H1 (cell line): ENCODE measurements at regions of chr6 and their contacts with region 1.

Region 1: DNA sequence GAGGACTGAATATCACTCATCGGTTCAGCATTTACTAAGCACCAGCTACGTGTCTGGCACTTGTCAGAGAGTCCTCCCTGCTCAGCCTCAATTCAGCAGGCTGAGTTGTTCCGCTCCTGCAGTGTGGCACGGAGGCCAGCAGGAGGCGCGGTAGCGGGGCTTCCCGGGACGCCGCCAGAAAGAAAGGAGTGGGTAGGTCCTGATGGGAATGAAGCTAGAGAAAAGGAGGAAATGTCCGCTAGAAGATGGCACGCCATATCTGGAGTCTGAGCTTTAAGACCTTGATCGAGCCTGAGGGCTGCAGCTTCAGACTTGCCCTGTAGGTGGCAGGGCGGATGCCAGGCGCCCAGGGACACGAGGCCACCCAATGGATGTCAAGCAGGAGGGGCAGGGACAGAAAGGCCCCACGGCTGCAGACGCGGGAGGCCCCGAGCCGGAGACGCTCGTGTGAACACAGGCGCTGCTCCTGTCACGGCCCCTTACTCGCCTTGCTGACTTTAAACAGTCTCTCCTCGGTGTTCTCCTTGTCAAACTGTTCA is 18.7 kb downstream of the SERPINB6 start:
- DNase-seq: peak; percentile 89 to 97
- H3K4me3 ChIP-seq: no peak overlapping the region; a peak in 1 of 8 replicates
- H3K27ac ChIP-seq: no peak overlapping the region
- H3K4me1 ChIP-seq: peaks cover 0 to 7% (median 3%) of the 10 kb centered on the region in 4 experiments; a peak in 6 of 7 replicates
- H3K27me3 ChIP-seq: no peaks in the 10 kb centered on the region
- CTCF ChIP-seq: peak; percentile 79 to 99 (median 89)
- EP300 ChIP-seq: no peak
- POLR2A ChIP-seq: no peak
- RAD21 ChIP-seq: peak; percentile 60 to 74

Region 2: GRCh38 chr6:2783188-2783963 is 169.2 kb before region 1 on chr6:
- CTCF ChIA-PET with region 1: interaction called, 28 read pairs
- POLR2A ChIA-PET with region 1: no interaction called
- DNase-seq: peak in 1 of 2 experiments; percentile 69
- H3K4me3 ChIP-seq: no peak overlapping the region
- H3K27ac ChIP-seq: no peak overlapping the region
- H3K4me1 ChIP-seq: peaks cover 0 to 3% (median 0%) of the 10 kb centered on the region in 4 experiments; a peak in 2 of 7 replicates
- H3K27me3 ChIP-seq: no peaks in the 10 kb centered on the region
- CTCF ChIP-seq: peak; percentile 11 to 66 (median 54); a peak in 3 of 4 replicates
- EP300 ChIP-seq: no peak
- POLR2A ChIP-seq: no peak
- RAD21 ChIP-seq: peak in 1 of 2 experiments; percentile 24; a peak in 1 of 4 replicates

Region 3: DNA sequence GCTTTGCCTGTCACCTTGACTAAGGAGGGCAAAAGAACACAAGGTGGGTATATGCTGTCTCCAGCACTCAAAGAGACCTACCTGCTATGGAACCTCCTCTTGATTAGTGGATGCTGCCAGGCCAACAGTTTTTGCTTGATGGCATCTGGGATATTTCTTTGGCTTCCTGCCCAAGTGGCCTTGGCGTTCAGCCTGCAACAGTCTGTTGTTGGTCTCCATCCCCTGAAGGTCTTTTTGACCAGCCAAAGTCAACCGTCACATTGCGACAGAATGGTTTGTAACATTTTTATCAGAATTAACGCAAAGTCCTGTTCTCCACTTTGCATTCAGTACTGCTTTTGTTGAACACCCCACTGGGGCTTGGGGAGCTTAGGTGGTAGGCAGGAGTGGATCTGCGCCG is 148.1 kb before region 1 on chr6:
- CTCF ChIA-PET with region 1: no interaction called
- POLR2A ChIA-PET with region 1: no interaction called
- DNase-seq: no peak
- H3K4me3 ChIP-seq: no peak overlapping the region
- H3K27ac ChIP-seq: no peak overlapping the region
- H3K4me1 ChIP-seq: peaks cover 0 to 5% (median 2%) of the 10 kb centered on the region in 4 experiments; a peak in 2 of 7 replicates
- H3K27me3 ChIP-seq: no peaks in the 10 kb centered on the region
- CTCF ChIP-seq: no peak
- EP300 ChIP-seq: no peak
- POLR2A ChIP-seq: no peak
- RAD21 ChIP-seq: no peak

Region 4: GRCh38 chr6:2841264-2842138 is 111.1 kb before region 1 on chr6 and contains the start of gene SERPINB1:
- CTCF ChIA-PET with region 1: interaction called, 32 read pairs
- POLR2A ChIA-PET with region 1: interaction called, 3 read pairs
- DNase-seq: peak; percentile 69 to 83
- H3K4me3 ChIP-seq: peak within 1 kb of the TSS; percentile 21 to 62 (median 53)
- H3K27ac ChIP-seq: peak within 1 kb of the TSS; percentile 87
- H3K4me1 ChIP-seq: peaks cover 8 to 17% (median 10%) of the 10 kb centered on the region in 4 experiments
- H3K27me3 ChIP-seq: no peaks in the 10 kb centered on the region
- CTCF ChIP-seq: peak in 2 of 3 experiments; percentile 5 to 17; a peak in 2 of 4 replicates
- EP300 ChIP-seq: peak in 1 of 2 experiments; percentile 34; a peak in 1 of 3 replicates
- POLR2A ChIP-seq: peak; percentile 59 to 79
- RAD21 ChIP-seq: peak in 1 of 2 experiments; percentile 19; a peak in 1 of 4 replicates
- total RNA-seq, gene SERPINB1: 17.3 and 20.0 TPM in 2 replicates

Region 5: DNA sequence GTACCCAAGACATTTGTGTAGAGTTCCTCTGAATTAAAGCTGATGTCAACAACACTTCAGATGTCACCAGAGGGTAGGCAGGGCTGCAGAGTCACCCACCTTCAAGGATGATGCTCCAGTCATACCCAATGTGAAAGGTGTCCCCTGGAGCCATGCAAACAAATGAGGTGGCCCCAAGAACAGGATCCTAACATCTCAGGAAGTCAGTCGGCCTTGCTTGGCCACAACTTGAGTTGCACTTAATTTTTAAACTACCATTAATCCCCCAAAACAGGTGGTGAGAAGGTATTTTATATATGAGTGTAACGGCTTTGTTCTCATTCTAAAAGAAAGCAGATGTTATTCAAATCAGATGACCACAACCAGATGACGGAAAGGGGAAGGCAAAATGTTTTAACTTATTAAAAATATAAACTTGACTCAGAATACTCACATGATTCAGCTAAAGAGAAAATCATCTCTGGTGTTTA is 89.9 kb before region 1 on chr6:
- CTCF ChIA-PET with region 1: interaction called, 19 read pairs
- POLR2A ChIA-PET with region 1: no interaction called
- DNase-seq: no peak
- H3K4me3 ChIP-seq: no peak overlapping the region
- H3K27ac ChIP-seq: no peak overlapping the region
- H3K4me1 ChIP-seq: peaks cover 8 to 27% (median 17%) of the 10 kb centered on the region in 4 experiments
- H3K27me3 ChIP-seq: no peaks in the 10 kb centered on the region
- CTCF ChIP-seq: no peak
- EP300 ChIP-seq: no peak
- POLR2A ChIP-seq: no peak
- RAD21 ChIP-seq: no peak

Region 6: DNA sequence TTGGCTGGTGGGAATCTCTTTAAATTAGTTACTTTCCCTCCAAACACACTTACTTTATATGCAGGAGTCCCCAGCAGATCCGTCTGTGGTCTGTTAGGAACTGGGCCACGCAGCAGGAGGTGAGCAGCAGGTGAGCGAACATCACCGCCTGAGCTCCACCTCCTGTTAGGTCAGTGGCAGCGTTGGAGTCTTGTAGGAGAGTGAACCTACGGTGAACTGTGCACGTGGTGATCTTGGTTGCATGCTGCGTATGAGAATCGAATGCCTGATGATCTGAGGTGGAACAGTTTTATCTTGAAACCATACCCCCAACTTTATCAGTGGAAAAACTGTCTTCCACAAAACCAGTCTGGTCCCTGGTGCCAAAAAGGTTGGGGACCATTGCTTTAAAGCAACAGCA is 13.7 kb after region 1 on chr6:
- CTCF ChIA-PET with region 1: interaction called, 22 read pairs
- POLR2A ChIA-PET with region 1: interaction called, 4 read pairs
- DNase-seq: no peak
- H3K4me3 ChIP-seq: no peak overlapping the region
- H3K27ac ChIP-seq: no peak overlapping the region
- H3K4me1 ChIP-seq: peaks cover 5 to 9% (median 6%) of the 10 kb centered on the region in 4 experiments
- H3K27me3 ChIP-seq: no peaks in the 10 kb centered on the region; a peak in 1 of 7 replicates
- CTCF ChIP-seq: no peak
- EP300 ChIP-seq: no peak
- POLR2A ChIP-seq: no peak
- RAD21 ChIP-seq: no peak

Region 7: DNA sequence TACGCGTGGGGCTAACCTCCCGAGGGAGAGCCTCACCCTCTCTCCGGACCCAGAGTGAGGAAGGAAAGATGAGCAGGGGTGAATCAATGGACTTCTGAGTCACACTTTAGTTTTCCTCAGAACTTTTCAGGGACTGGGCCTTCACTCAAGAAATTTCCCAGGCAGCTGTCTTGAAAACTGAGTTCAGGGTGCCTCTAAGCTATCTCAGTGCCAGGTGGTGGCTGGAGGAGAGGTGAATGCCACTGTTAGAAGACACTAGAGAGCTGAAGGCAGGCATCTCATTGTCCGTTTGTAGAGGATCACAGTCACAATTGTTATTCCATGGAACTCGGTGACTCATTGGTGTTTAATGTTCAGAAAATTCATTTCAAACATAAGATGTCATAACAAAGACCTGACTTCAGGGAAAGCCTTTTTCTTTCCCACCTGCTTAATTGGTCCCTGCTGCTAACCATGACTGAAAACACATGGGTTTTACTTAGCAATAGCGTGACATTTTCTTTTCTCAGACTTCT is 24.0 kb after region 1 on chr6:
- CTCF ChIA-PET with region 1: interaction called, 54 read pairs
- POLR2A ChIA-PET with region 1: interaction called, 3 read pairs
- DNase-seq: no peak
- H3K4me3 ChIP-seq: no peak overlapping the region
- H3K27ac ChIP-seq: no peak overlapping the region
- H3K4me1 ChIP-seq: peaks cover 0 to 6% (median 0%) of the 10 kb centered on the region in 4 experiments; a peak in 2 of 7 replicates
- H3K27me3 ChIP-seq: 0 out of 7 replicates have a peak, but pooled peaks cover 0 to under 1% (median 0%) of the 10 kb centered on the region in 4 experiments
- CTCF ChIP-seq: no peak
- EP300 ChIP-seq: no peak
- POLR2A ChIP-seq: no peak
- RAD21 ChIP-seq: no peak